ENCODE measurements at regions of chr17 and their contacts with region 1.

Region 1: GRCh38 chr17:51251010-51251409 is 8.8 kb downstream of the MBTD1 start:
- DNase-seq: no peak
- H3K4me3 ChIP-seq: no peak overlapping the region
- H3K27ac ChIP-seq: no peak overlapping the region
- H3K4me1 ChIP-seq: peaks cover 8% of the 10 kb centered on the region
- H3K27me3 ChIP-seq: no peaks in the 10 kb centered on the region
- CTCF ChIP-seq: no peak

Region 2: GRCh38 chr17:51153210-51154072 is 97.6 kb before region 1 on chr17 and contains the start of gene NME1:
- CTCF ChIA-PET with region 1: no interaction called
- dilution Hi-C with region 1: no loop called
- in situ Hi-C with region 1: no loop called
- intact Hi-C with region 1: no loop called
- DNase-seq: peak; percentile 99
- H3K4me3 ChIP-seq: peak within 1 kb of the TSS; percentile 69 to 88 (median 71)
- H3K27ac ChIP-seq: peak within 1 kb of the TSS; percentile 83
- H3K4me1 ChIP-seq: peaks cover 14% of the 10 kb centered on the region
- H3K27me3 ChIP-seq: no peaks in the 10 kb centered on the region
- CTCF ChIP-seq: peak; percentile 84 to 92
- total RNA-seq, gene NME1: 47.7 to 180 TPM

Region 3: GRCh38 chr17:51189628-51190027 is 61.4 kb before region 1 on chr17:
- CTCF ChIA-PET with region 1: no interaction called
- dilution Hi-C with region 1: loop called (anchors 5 kb)
- in situ Hi-C with region 1: no loop called
- intact Hi-C with region 1: no loop called
- DNase-seq: no peak
- H3K4me3 ChIP-seq: no peak overlapping the region
- H3K27ac ChIP-seq: no peak overlapping the region
- H3K4me1 ChIP-seq: no peaks in the 10 kb centered on the region
- H3K27me3 ChIP-seq: no peaks in the 10 kb centered on the region
- CTCF ChIP-seq: no peak